PC-9 (cell line): ENCODE measurements at regions of chr5 and their contacts with region 1.

Region 1: DNA sequence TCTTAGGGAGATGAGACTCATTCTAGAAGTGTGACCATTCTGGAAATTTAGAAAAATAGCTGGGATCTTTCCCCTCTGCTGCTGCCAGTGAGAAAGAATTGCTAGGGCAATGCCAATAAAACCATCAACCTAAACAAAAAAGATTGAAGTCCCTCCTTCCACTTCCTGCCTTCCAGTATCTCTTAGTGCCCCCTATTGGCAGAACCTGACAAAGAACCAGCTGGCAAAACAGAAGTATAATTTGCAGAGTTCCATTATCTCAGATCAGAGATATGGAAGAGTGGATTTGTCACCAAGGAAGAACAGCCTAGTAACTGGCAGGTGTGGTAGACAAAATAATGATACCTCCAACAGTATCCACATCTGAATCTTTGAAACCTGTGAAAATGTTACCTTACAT is 13.8 kb upstream of the PLCXD3 start:
- DNase-seq: no peak
- H3K4me3 ChIP-seq: no peak overlapping the region
- H3K27ac ChIP-seq: no peak overlapping the region
- H3K4me1 ChIP-seq: peaks cover 17% of the 10 kb centered on the region
- H3K27me3 ChIP-seq: no peaks in the 10 kb centered on the region
- CTCF ChIP-seq: peak; percentile 41; the same call in 1 of the 2 replicates

Region 2: DNA sequence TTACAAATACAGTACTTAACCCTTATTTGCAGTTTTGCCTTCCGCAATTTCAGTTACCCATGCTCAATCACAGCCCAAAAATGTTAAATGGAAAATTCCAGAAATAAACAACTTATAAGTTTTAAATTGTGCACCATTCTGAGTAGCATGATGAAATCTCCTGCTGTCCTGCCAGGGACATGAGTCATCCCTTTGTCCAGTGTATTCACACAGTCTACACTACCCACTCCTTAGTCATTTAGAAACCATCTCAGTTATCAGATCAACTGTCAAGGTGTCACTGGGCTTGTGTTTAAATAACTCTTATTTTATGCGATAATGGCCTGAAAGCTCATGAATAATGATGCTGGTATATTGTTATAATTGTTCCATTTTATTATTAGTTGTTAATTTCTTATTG is 109.6 kb before region 1 on chr5:
- CTCF ChIA-PET with region 1: no interaction called
- POLR2A ChIA-PET with region 1: no interaction called
- intact Hi-C with region 1: loop called (anchors 1 kb)
- DNase-seq: peak; percentile 66 to 89
- H3K4me3 ChIP-seq: no peak overlapping the region
- H3K27ac ChIP-seq: peak overlapping the region; percentile 70
- H3K4me1 ChIP-seq: peaks cover 25% of the 10 kb centered on the region
- H3K27me3 ChIP-seq: no peaks in the 10 kb centered on the region
- CTCF ChIP-seq: no peak